T-cell (primary cell): ENCODE measurements at regions of chr4 and their contacts with region 1.

Region 1: GRCh38 chr4:82865592-82865991 is 25.4 kb downstream of the SEC31A start:
- DNase-seq: peak in 2 of 35 experiments; percentile 6 to 48
- ATAC-seq: peak; percentile 48 to 75 (median 68)
- H3K4me3 ChIP-seq: no peak overlapping the region
- H3K4me3 Mint-ChIP-seq: peak overlapping the region; percentile 31 to 57 (median 40)
- H3K27ac ChIP-seq: peak overlapping the region; percentile 28
- H3K27ac Mint-ChIP-seq: peak overlapping the region; percentile 82 to 90
- H3K4me1 ChIP-seq: peaks cover 4 to 15% of the 10 kb centered on the region in 2 experiments
- H3K4me1 Mint-ChIP-seq: peaks cover 24 to 29% (median 26%) of the 10 kb centered on the region in 3 donors
- H3K27me3 ChIP-seq: no peaks in the 10 kb centered on the region
- H3K27me3 Mint-ChIP-seq: no peaks in the 10 kb centered on the region

Region 2: DNA sequence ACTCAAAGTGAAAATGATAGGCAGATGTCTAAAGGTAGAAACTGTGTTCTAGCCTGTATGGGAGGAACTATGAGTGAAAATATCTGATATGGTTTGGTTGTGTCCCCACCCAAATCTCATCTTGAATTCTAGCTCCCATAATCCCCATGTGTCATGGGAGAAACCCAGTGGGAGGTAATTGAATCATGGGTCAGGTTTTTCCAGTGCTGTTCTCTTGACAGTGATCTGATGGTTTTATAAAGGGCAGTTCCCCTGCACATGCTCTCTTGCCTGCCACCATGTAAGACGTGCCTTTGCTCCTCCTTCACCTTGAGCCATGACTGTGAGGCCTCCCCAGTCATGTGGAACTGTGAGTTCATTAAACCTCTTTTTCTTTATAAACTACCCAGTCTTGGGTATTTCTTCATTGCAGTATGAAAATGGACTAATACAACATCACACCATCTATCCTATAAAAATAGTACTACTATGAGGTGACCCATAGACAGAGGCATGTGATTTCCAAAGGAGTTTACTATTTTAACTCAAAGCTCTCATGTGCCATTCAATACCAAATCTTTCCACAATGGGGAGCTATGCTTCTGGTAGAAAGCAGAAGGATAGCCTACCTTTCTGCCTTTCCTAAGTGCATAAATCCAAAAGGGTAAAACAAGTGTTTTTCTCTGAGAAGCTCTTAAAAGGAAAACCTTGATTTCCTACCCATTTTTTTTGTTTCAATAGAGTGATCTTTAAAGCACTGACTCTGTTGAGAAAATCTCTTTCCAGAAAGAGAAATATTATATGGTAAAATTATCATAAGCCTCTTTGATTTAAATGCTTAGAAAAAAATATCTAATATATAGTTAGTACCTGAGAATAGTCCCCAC is 13.5 kb before region 1 on chr4:
- CTCF ChIA-PET with region 1: interaction called, 5 to 11 read pairs
- POLR2A ChIA-PET with region 1: interaction called, 3 to 7 read pairs
- DNase-seq: peak in 1 of 35 experiments; percentile 59
- ATAC-seq: no peak
- H3K4me3 ChIP-seq: no peak overlapping the region
- H3K4me3 Mint-ChIP-seq: no peak overlapping the region
- H3K27ac ChIP-seq: no peak overlapping the region
- H3K27ac Mint-ChIP-seq: peak overlapping the region; percentile 17 to 45
- H3K4me1 ChIP-seq: no peaks in the 10 kb centered on the region
- H3K4me1 Mint-ChIP-seq: peaks cover 0 to 4% (median 2%) of the 10 kb centered on the region in 3 donors
- H3K27me3 ChIP-seq: no peaks in the 10 kb centered on the region
- H3K27me3 Mint-ChIP-seq: no peaks in the 10 kb centered on the region